ENCODE measurements at regions of chr7 and their contacts with region 1.

Region 1: DNA sequence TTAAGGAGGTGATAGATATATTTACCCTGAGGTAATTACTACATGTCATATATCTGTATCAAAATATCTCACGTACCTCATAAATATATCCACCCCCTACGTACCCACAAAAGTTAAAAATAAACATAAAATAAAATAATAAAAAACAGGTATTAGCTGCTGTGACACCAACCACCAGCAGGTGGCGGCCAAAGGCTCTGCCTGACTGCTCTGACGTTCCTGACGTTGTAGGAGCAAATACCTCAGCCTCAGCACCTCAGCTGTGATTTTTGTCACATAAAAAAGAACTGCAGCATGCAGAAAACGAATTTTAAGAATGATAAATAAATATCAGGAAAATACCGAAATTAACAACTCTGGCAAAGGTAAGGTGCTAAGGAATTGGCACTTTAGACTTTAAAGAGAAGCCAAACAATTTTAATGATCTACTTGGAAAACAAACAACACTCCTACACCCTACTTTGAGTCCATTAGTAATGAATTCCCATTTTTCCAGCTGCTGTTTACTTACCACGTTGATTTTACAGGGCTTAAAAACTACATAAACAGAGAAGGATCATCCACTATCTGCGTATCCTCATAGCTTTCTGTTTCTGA is 125.4 kb upstream of the TARP start:
- DNase-seq: peak; percentile 62
- H3K4me3 Mint-ChIP-seq: no peak overlapping the region
- H3K27ac Mint-ChIP-seq: no peak overlapping the region
- H3K4me1 Mint-ChIP-seq: peaks cover 2% of the 10 kb centered on the region
- H3K27me3 Mint-ChIP-seq: peaks cover 3% of the 10 kb centered on the region

Region 2: GRCh38 chr7:38360776-38361175 is 38.0 kb before region 1 on chr7:
- CTCF ChIA-PET with region 1: no interaction called
- intact Hi-C with region 1: no loop called
- DNase-seq: no peak
- H3K4me3 Mint-ChIP-seq: peak overlapping the region; percentile 91
- H3K27ac Mint-ChIP-seq: peak overlapping the region; percentile 94
- H3K4me1 Mint-ChIP-seq: peaks cover 39% of the 10 kb centered on the region
- H3K27me3 Mint-ChIP-seq: no peaks in the 10 kb centered on the region

Region 3: GRCh38 chr7:38411404-38411803 is 12.6 kb after region 1 on chr7:
- CTCF ChIA-PET with region 1: interaction called, 15 read pairs
- intact Hi-C with region 1: no loop called
- DNase-seq: no peak
- H3K4me3 Mint-ChIP-seq: no peak overlapping the region
- H3K27ac Mint-ChIP-seq: no peak overlapping the region
- H3K4me1 Mint-ChIP-seq: peaks cover 23% of the 10 kb centered on the region
- H3K27me3 Mint-ChIP-seq: no peaks in the 10 kb centered on the region

Region 4: GRCh38 chr7:38630720-38631673 is 232.2 kb after region 1 on chr7 and contains the start of gene AMPH:
- CTCF ChIA-PET with region 1: interaction called, 11 read pairs
- intact Hi-C with region 1: loop called (anchors 1 kb)
- DNase-seq: peak; percentile 31
- H3K4me3 Mint-ChIP-seq: peak within 1 kb of the TSS; percentile 64
- H3K27ac Mint-ChIP-seq: no peak within 1 kb of the TSS
- H3K4me1 Mint-ChIP-seq: peaks cover 11% of the 10 kb centered on the region
- H3K27me3 Mint-ChIP-seq: peaks cover 45% of the 10 kb centered on the region
- total RNA-seq, gene AMPH: 0.07 TPM in 1 of 2 experiments, not detected in the other

Region 5: DNA sequence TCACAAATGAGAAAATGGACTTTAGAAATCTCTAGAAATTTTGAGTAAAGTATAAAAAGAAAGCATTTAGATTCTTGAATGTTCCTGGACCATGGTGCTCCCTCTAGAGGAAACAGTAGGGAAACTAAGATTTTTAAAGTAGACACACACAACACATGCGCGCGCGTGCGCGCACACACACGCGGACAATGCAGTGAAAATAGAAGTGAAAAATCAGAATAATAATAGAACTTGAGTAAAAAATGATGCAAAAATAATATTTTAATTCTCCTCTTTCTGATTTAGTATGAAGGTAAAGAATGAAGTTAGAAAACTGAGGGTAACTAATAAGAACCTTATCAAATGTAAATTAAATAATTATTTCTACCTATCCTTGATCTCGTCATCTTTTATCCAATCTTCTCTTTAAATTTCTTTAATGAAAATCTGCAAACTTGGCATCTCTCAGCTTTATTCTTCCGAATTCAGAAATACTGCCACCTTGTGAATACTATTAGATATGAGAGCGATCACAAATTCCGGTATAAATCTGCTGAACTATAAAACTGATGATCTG is 349.3 kb after region 1 on chr7:
- CTCF ChIA-PET with region 1: no interaction called
- intact Hi-C with region 1: loop called (anchors 2 kb)
- DNase-seq: no peak
- H3K4me3 Mint-ChIP-seq: no peak overlapping the region
- H3K27ac Mint-ChIP-seq: no peak overlapping the region
- H3K4me1 Mint-ChIP-seq: peaks cover 3% of the 10 kb centered on the region
- H3K27me3 Mint-ChIP-seq: no peaks in the 10 kb centered on the region

Region 6: DNA sequence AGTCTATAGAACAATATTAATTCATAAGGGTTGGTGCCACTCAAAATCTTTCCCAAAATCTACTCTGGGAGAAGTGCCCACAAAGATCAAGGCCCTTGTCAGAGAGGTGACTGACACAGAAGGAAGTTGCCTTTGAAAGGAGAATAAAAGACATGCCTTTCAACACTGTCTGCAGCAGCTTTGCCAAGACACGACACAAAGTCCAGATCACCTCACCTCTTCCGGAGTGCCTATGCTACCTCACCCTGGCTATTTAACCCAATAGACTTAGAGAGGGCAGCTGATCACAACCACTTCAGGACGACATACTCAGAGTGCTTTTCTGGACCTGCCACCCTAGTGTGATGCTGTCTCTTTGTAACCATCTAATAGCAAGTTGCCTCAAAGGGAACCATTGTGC is 1118.4 kb after region 1 on chr7:
- CTCF ChIA-PET with region 1: no interaction called
- intact Hi-C with region 1: loop called (anchors 1 kb)
- DNase-seq: no peak
- H3K4me3 Mint-ChIP-seq: no peak overlapping the region
- H3K27ac Mint-ChIP-seq: no peak overlapping the region
- H3K4me1 Mint-ChIP-seq: no peaks in the 10 kb centered on the region
- H3K27me3 Mint-ChIP-seq: peaks cover 3% of the 10 kb centered on the region